ENCODE measurements at regions of chr6 and their contacts with region 1.

Region 1: DNA sequence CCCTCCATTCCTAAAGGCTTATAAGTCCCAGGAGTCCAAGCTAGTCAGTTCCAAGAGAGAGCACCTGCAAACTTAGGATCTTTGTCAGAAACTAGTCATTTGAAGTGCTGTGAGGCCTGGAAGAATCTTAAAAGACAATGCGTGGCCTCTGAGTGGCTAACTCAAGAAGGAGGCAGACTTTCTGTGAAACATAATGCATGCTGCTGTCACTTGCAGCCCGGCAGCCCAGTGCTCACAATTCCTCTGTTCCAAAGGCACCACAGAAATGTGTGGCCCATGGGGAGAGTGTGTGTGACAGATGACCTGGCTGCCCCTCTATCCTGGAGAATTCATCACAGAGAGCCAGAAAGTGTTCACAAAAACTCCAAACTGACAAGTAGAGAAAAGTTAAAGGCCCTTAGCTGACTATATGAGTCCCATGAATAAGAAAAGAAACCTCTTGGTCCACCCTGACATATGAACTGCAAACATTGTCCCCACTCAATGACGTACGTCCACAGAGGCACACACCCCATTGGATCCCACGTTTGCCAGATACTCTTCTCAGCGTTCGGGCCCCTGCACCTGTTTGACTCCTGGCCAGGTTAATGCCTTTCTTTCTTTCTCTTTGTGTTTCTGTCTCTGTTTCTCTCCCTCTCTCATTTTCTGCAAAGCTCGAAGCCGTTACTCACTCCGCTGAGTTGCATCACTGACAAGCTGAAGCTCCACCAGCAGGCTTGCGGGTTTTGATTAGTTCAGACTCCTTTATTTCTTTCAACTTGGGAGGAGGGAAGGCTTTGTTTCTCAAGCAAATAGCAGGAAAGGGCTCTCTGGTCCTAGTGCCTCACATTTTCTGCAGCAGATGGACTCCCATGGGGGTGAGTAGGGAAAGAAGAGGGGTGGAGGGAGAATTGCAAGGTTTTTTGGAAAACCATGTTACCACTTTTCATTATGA is 135.3 kb upstream of the SUPT3H start:
- DNase-seq: no peak
- ATAC-seq: no peak
- H3K4me3 ChIP-seq: no peak overlapping the region
- H3K4me3 Mint-ChIP-seq: no peak overlapping the region
- H3K27ac ChIP-seq: no peak overlapping the region
- H3K27ac Mint-ChIP-seq: no peak overlapping the region
- H3K4me1 ChIP-seq: no peaks in the 10 kb centered on the region
- H3K4me1 Mint-ChIP-seq: no peaks in the 10 kb centered on the region
- H3K27me3 ChIP-seq: no peaks in the 10 kb centered on the region
- H3K27me3 Mint-ChIP-seq: no peaks in the 10 kb centered on the region
- CTCF ChIP-seq: no peak

Region 2: DNA sequence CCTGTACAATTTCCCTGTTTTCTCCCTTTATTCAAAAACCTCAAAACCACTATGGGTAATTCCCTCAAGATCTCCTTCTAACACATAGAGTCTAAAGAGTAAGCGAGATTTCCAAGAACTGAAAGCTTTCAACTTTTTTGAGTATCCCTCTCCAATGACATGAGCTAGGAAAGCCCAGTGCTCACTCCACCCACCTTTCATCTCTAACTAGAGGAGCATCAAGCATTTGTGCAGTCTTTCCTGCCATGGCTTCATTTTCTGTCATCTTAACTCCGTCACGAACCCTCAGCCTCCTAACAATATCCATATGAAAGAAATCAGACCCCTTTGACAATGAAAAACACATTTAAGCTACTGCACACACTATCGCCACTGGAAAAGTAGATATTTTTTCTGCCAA is 43.4 kb before region 1 on chr6:
- intact Hi-C with region 1: loop called (anchors 1 kb)
- DNase-seq: no peak
- ATAC-seq: no peak
- H3K4me3 ChIP-seq: no peak overlapping the region
- H3K4me3 Mint-ChIP-seq: no peak overlapping the region
- H3K27ac ChIP-seq: no peak overlapping the region
- H3K27ac Mint-ChIP-seq: no peak overlapping the region
- H3K4me1 ChIP-seq: no peaks in the 10 kb centered on the region
- H3K4me1 Mint-ChIP-seq: no peaks in the 10 kb centered on the region
- H3K27me3 ChIP-seq: no peaks in the 10 kb centered on the region
- H3K27me3 Mint-ChIP-seq: no peaks in the 10 kb centered on the region
- CTCF ChIP-seq: no peak

Region 3: DNA sequence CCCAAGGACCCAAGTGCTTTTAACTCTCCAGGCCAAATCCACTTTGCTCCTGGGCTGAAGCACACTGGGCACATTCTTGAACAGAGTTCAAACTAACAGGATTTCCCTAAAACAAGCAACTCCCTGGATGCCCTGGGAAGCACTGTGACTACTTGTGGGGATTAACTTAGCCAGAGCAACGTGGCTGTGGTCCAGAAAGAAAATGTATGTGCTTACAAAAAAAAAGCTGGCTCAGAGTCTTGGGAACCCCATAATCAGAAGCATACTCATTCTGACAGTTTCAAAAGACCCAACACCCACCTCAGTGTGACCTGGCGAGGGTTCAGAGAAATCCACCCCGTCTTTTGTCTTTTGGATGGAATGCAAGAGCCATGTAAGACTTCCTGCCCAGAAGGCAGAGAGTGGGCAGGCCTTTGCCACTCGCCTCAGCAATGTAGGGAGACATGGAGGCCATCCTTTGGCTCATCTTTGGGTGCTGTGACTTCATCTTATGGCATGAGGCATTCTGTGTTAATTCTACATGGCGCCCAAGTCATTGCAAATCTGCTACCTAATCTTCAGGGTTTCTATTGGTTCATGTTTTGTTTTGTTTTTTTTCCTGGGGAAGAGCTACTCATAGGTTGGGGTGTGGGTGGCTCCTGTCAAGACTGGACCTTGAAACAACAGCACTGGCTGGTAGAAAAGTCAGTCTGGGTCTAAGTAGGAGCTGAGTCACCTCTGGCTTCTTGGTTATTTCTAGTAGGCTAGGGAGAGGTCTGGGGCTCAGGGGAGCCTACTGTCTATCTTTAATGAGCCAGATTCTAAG is 113.2 kb after region 1 on chr6:
- intact Hi-C with region 1: no loop called
- DNase-seq: no peak
- ATAC-seq: no peak
- H3K4me3 ChIP-seq: no peak overlapping the region
- H3K4me3 Mint-ChIP-seq: no peak overlapping the region
- H3K27ac ChIP-seq: no peak overlapping the region
- H3K27ac Mint-ChIP-seq: no peak overlapping the region
- H3K4me1 ChIP-seq: peaks cover 4% of the 10 kb centered on the region
- H3K4me1 Mint-ChIP-seq: no peaks in the 10 kb centered on the region
- H3K27me3 ChIP-seq: no peaks in the 10 kb centered on the region
- H3K27me3 Mint-ChIP-seq: peaks cover 0 to 6% of the 10 kb centered on the region in 2 donors
- CTCF ChIP-seq: no peak

Measured in natural killer cell (primary cell).